ENCODE measurements at regions of chr18 and their contacts with region 1.

Region 1: DNA sequence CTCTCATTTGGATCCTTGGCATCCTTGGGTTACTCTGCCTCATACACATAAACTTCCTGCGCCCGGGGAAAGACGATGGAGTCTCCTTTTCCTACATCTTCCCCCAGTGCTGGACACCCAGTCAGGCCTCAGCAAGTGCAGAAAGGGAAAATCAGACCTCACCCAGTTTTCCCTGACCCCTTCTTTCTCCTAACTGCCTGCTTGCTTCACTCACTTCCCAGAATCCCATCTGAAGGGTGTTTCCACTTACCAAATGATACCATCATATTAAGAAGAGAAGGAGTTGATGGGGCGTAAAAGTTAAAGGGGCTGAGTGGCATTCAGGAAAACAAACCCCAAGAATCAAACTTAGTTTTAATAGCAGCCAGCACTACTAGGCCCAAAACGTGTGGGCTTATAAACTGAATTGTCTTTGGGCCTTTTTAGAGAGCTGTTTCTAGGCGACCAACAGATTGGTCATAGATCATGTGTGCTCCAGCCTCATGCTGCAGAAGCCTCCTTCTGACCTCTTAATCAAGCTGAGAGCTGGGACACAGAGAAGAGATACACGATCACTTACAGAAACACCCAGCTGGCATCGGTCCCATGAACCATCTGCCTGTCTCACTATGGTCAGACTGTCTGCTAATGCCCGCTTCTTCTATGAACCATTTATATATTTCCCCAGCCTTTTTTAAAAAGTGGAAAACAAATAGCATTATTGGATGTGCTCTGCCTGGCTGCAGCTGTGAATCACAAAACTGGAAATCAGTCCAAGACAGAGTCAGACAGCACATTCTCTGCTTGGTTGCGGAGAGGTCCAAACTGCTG is 165.7 kb upstream of the SLC14A2 start:
- DNase-seq: peak; percentile 30 to 50
- ATAC-seq: peak; percentile 38 to 86 (median 82)
- H3K4me3 ChIP-seq: no peak overlapping the region
- H3K27ac ChIP-seq: peak overlapping the region in 8 of 10 donors; percentile 44 to 82 (median 55)
- H3K4me1 ChIP-seq: peaks cover 0 to 23% (median 0%) of the 10 kb centered on the region in 9 donors
- H3K27me3 ChIP-seq: no peaks in the 10 kb centered on the region
- CTCF ChIP-seq: no peak

Region 2: DNA sequence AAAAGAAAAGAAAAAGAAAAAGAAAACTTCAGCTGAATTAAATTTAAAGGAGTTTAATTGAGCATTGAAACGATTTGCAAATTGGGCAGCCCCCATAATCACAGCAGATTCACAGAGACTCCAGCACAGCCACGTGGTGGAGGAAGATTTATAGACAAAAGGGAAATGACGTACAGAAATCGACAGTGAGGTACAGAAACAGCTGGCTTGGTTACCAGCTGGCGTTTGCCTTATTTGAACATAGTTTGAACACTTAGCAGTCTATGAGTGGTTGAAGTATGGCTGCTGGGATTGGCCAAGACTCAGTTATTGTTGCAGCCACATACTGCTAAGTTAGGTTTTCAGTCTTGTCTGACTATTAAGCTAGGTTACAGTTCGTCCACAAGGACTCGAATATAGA is 146.6 kb before region 1 on chr18:
- intact Hi-C with region 1: no loop called
- DNase-seq: no peak
- ATAC-seq: no peak
- H3K4me3 ChIP-seq: no peak overlapping the region
- H3K27ac ChIP-seq: no peak overlapping the region
- H3K4me1 ChIP-seq: peaks cover 0 to 12% (median 0%) of the 10 kb centered on the region in 9 donors
- H3K27me3 ChIP-seq: no peaks in the 10 kb centered on the region
- CTCF ChIP-seq: no peak

Region 3: DNA sequence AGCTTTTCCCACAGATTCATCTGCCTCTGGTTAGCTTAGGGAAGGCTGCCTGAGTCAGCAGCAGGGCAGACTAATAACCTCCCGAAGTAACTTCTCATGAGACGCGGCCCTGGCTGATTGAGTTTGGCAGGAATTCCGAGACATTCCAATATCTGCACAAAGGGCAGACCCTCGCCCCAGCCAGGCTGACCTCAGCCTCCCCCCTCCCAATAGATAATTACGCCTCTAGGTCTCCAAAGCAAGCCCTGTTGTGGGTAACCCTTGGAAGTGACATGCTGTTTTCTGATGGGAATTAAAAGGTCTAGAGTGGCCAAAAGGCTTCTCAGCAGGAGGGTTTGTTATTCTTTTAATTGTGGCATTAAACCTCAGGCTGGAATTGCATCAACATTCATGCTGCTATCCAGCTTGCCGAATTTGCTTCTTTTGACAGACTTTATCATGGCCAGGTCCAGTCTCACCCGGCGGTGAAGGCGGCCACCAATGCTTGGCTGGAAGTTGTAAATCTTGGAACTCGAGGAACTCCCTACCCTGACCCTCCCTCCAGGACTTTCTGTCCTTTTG is 67.6 kb after region 1 on chr18:
- intact Hi-C with region 1: loop called in 1 of 10 experiments (anchors 10 kb)
- DNase-seq: peak in 1 of 2 donors; percentile 41
- ATAC-seq: peak; percentile 42 to 85 (median 70)
- H3K4me3 ChIP-seq: no peak overlapping the region
- H3K27ac ChIP-seq: peak overlapping the region in 8 of 10 donors; percentile 22 to 79 (median 44)
- H3K4me1 ChIP-seq: peaks cover 0 to 31% (median 10%) of the 10 kb centered on the region in 9 donors
- H3K27me3 ChIP-seq: no peaks in the 10 kb centered on the region
- CTCF ChIP-seq: no peak

Measured in heart right ventricle (tissue), 16 donors.